GM13976 (cell line): ENCODE measurements at regions of chr16 and their contacts with region 1.

Region 1: GRCh38 chr16:67159593-67160406 is at the starts of genes FBXL8 and TRADD:
- DNase-seq: peak; percentile 88
- CTCF ChIP-seq: peak; percentile 13

Region 2: GRCh38 chr16:66961065-66961744 is 198.6 kb before region 1 on chr16 and contains the start of gene CES3:
- in situ Hi-C with region 1: loop called (anchors 25 kb)
- DNase-seq: peak; percentile 77
- CTCF ChIP-seq: peak; percentile 74

Region 3: DNA sequence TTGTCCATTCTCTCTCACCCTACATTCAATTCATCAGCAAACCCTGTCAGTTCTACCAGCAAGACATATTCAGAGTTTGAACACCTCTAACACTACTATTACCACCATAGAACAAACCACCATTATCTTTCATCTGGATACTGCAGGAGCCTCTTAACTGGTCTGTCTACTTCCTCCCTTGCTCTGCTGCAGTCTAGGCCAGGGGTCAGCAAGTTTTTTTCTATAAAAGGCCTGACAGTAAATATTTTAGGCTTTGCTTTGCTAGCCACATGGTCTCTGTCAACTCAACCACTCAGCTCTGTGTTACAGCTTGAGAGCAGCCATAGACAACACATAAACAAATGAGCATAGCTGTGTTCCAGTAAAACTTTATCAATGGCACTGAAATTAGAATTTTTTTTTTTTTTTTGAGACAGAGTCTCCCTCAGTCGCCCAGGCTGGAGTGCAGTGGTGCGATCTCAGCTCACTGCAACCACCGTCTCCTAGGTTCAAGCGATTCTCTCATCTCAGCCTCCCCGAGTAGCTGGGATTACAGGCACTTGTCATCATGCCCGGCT is 153.0 kb after region 1 on chr16:
- in situ Hi-C with region 1: no loop called
- DNase-seq: no peak
- CTCF ChIP-seq: no peak